ENCODE measurements at regions of chr20 and their contacts with region 1.

Region 1: DNA sequence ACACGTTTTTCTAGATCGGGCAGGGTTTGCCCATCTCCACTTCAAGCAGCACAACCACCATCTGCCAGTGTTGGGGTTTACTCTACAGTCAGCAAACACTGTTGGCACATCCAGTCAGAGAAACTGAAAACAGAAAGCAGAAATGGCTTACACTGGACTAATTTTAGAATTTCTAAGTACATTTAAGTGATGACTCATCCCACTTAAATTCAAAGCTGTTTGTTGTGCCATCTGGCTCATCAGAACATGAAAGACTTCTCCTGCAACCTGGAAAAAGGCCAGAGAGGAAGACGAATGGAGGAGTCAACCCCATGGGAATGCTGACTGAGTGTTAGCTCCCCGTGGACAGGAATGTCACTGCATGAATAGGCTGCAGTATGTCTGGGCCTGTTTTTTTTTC is 21.8 kb downstream of the FAM209B start:
- DNase-seq: no peak
- H3K4me3 ChIP-seq: no peak overlapping the region
- H3K27ac ChIP-seq: no peak overlapping the region
- H3K4me1 ChIP-seq: peaks cover 9 to 18% (median 10%) of the 10 kb centered on the region in 4 donors
- H3K27me3 ChIP-seq: no peaks in the 10 kb centered on the region
- CTCF ChIP-seq: peak in 1 of 3 experiments; percentile 10
- EP300 ChIP-seq: no peak
- POLR2A ChIP-seq: no peak

Region 2: GRCh38 chr20:56974499-56975236 is 419.8 kb after region 1 on chr20:
- intact Hi-C with region 1: loop called (anchors 5 kb)
- DNase-seq: no peak
- H3K4me3 ChIP-seq: no peak overlapping the region
- H3K27ac ChIP-seq: no peak overlapping the region
- H3K4me1 ChIP-seq: peaks cover 0 to 6% (median 2%) of the 10 kb centered on the region in 4 donors
- H3K27me3 ChIP-seq: peaks cover 0 to 83% (median 1%) of the 10 kb centered on the region in 4 donors
- CTCF ChIP-seq: peak; percentile 53 to 62 (median 53)
- EP300 ChIP-seq: no peak
- POLR2A ChIP-seq: no peak

Region 3: GRCh38 chr20:57048027-57048869 is 493.4 kb after region 1 on chr20:
- intact Hi-C with region 1: loop called (anchors 5 kb)
- DNase-seq: no peak
- H3K4me3 ChIP-seq: no peak overlapping the region
- H3K27ac ChIP-seq: no peak overlapping the region
- H3K4me1 ChIP-seq: peaks cover 0 to 17% (median 9%) of the 10 kb centered on the region in 4 donors
- H3K27me3 ChIP-seq: no peaks in the 10 kb centered on the region
- CTCF ChIP-seq: peak; percentile 50 to 66 (median 51)
- EP300 ChIP-seq: no peak
- POLR2A ChIP-seq: no peak

Region 4: GRCh38 chr20:57061058-57061900 is 506.4 kb after region 1 on chr20:
- intact Hi-C with region 1: loop called (anchors 5 kb)
- DNase-seq: no peak
- H3K4me3 ChIP-seq: no peak overlapping the region
- H3K27ac ChIP-seq: no peak overlapping the region
- H3K4me1 ChIP-seq: peaks cover 0 to 7% (median 3%) of the 10 kb centered on the region in 4 donors
- H3K27me3 ChIP-seq: peaks cover 0 to 23% (median 0%) of the 10 kb centered on the region in 4 donors
- CTCF ChIP-seq: peak; percentile 47 to 61 (median 48)
- EP300 ChIP-seq: no peak
- POLR2A ChIP-seq: no peak

Region 5: GRCh38 chr20:57346477-57346876 is 791.6 kb after region 1 on chr20:
- intact Hi-C with region 1: loop called (anchors 5 kb)
- DNase-seq: no peak
- H3K4me3 ChIP-seq: no peak overlapping the region
- H3K27ac ChIP-seq: no peak overlapping the region
- H3K4me1 ChIP-seq: peaks cover 0 to 6% (median under 1%) of the 10 kb centered on the region in 4 donors
- H3K27me3 ChIP-seq: peaks cover 0 to 16% (median 0%) of the 10 kb centered on the region in 4 donors
- CTCF ChIP-seq: peak; percentile 70 to 81 (median 78)
- EP300 ChIP-seq: no peak
- POLR2A ChIP-seq: no peak

Measured in esophagus muscularis mucosa (tissue), 4 donors.